Activated CD4-positive, alpha-beta memory T cell treated with anti-CD3 and anti-CD28 coated beads, Interleukin-2, amount 10 ng/mL, durations not matched to agents 7 days and 5 days (primary cell): ENCODE measurements at regions of chr3 and their contacts with region 1.

Region 1: GRCh38 chr3:194472290-194472920 is 14.4 kb downstream of the ATP13A3 start:
- DNase-seq: no peak
- H3K4me3 Mint-ChIP-seq: no peak overlapping the region
- H3K27ac Mint-ChIP-seq: no peak overlapping the region
- H3K4me1 Mint-ChIP-seq: peaks cover 6% of the 10 kb centered on the region
- H3K27me3 Mint-ChIP-seq: no peaks in the 10 kb centered on the region

Region 2: DNA sequence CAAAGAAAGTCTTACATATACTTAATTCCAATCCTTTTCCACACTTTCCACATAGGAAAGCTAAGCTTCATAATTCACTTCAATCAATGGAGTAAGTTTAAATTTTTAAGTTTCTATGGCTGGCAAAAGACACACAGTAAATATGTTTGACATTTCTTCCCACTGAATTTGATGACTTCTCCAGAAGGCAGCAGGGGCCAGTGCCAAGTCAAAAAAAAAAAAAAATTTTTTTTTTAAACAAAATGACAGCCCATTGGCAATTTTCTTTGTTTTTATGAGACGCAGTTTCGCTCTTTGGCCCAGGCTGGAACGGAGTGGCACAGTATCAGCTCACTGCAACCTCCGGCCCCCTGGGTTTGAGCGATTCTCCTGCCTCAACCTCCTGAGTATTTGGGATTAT is 14.3 kb before region 1 on chr3:
- CTCF ChIA-PET with region 1: interaction called, 12 read pairs
- POLR2A ChIA-PET with region 1: no interaction called
- DNase-seq: no peak
- H3K4me3 Mint-ChIP-seq: no peak overlapping the region
- H3K27ac Mint-ChIP-seq: no peak overlapping the region
- H3K4me1 Mint-ChIP-seq: no peaks in the 10 kb centered on the region
- H3K27me3 Mint-ChIP-seq: no peaks in the 10 kb centered on the region

Region 3: GRCh38 chr3:194486540-194487288 is 14.3 kb after region 1 on chr3 and contains the start of gene ATP13A3:
- CTCF ChIA-PET with region 1: interaction called, 23 read pairs
- POLR2A ChIA-PET with region 1: interaction called, 14 read pairs
- DNase-seq: peak; percentile 91
- H3K4me3 Mint-ChIP-seq: peak within 1 kb of the TSS; percentile 91
- H3K27ac Mint-ChIP-seq: peak within 1 kb of the TSS; percentile 91
- H3K4me1 Mint-ChIP-seq: peaks cover 64% of the 10 kb centered on the region
- H3K27me3 Mint-ChIP-seq: no peaks in the 10 kb centered on the region
- total RNA-seq, gene ATP13A3: 76.8 to 77.8 TPM

Region 4: DNA sequence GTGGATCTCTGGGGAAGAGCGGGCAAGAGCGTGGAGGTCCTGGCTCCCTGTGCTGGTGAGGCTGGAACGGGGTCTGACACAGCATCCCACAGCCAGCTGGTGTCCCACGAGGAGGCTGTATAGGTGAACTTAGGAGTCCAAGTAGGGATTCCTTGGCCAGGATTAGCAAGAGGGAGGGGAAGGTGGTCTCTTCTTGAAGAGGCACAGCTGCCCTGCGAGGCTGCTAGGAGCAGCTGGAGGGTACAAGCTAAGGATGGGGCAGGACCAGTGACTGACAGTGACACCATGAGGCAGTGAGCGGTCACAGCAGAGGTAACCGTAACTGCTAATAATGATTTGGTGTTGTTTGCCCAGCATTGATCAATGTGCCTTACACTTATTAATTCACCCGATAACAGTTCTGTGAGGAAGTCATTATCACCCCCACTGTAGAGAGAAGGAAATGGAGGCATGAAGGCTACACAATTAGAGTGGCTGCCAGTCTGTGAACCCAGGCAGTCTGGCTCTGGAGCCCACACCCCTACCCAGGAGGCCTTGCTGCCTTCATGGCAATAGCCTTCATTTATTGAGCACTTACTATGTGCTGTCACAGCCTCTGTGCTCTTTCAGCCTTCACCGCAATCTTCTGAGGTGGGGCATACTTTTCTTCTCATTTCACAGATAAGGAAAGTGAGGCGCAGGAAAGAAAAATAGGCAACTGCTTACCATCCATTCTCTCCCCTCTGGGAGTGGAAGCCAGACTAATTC is 101.5 kb after region 1 on chr3:
- CTCF ChIA-PET with region 1: interaction called, 40 read pairs
- POLR2A ChIA-PET with region 1: interaction called, 3 read pairs
- DNase-seq: peak; percentile 43
- H3K4me3 Mint-ChIP-seq: no peak overlapping the region
- H3K27ac Mint-ChIP-seq: no peak overlapping the region
- H3K4me1 Mint-ChIP-seq: peaks cover 18% of the 10 kb centered on the region
- H3K27me3 Mint-ChIP-seq: peaks cover 28% of the 10 kb centered on the region

Region 5: DNA sequence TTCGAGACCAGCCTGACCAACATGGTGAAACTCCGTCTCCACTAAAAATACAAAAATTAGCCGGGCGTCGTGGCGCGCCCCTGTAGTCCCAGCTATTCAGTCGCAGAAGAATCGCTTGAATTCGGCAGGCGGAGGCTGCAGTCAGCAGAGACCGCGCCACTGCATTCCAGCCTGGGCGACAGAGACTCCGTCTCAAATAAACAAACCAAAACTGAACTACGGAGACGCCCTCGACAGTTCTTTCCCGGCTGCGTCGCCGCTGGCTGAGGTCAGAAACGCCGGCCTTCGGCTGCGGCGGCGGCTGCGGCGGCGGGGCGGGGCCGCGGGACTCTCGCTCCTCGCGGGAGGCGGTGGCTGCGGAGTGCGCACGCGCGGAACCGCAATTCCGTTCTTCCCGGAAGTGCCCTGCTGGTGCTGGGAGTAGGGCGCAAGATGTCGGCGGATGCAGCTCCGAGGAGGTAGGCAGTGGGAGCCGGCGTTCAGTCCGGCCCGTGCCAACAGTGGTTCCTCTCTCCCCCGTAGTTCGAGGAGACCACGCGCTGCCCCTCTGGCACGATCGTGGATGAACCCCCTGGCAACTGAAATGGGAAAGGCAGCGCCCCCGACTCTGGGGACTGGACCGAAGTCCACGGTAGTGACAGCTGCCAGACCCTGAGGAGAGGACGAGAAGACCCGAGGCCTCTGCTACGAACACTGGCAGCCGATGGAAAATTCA is 111.4 kb after region 1 on chr3:
- CTCF ChIA-PET with region 1: interaction called, 24 read pairs
- POLR2A ChIA-PET with region 1: interaction called, 7 read pairs
- DNase-seq: peak; percentile 95
- H3K4me3 Mint-ChIP-seq: peak overlapping the region; percentile 97
- H3K27ac Mint-ChIP-seq: peak overlapping the region; percentile 93
- H3K4me1 Mint-ChIP-seq: peaks cover 31% of the 10 kb centered on the region
- H3K27me3 Mint-ChIP-seq: no peaks in the 10 kb centered on the region

Region 6: DNA sequence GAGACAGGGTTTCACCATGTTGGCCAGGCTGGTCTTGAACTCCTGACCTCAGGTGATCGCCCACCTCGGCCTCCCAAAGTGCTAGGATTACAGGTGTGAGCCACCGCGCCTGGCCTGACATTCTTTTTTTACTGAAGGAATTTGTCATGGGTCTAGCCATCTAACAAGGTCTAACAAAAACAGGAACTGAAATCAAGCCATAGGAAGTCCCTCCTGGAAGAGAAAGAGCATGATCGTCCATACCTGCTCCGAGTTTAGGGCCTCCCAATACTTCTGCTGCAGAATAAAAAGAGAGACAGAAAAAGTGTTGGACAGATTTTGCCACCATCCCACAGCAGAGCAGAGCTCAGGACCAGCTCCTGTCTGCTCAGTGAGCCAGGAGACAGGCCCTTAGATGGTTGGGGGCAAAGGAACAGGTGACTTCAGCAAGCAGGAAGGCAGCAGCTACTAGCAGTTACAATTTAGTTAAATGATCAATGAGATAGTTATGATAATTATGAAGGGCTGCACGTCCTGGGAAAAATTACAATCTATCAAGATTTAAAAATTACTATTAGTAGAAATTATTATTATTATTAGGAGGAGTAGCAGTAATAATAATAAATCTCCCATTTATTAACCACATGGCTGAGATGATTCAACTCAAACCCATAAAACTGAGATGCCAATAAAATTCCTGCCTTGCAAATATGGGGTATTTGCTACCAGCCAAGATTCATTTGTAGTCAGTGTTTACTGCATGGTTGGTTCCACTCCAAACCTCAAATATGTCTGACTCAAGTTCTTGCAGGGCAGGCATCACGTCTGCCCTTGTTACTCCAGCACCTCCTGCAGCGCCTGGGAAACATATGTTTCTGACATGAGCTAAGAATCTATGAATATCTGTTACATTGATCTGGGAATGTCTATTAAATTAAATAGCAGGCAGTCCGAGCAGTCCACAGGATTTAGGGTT is 120.7 kb after region 1 on chr3:
- CTCF ChIA-PET with region 1: interaction called, 75 read pairs
- POLR2A ChIA-PET with region 1: interaction called, 5 read pairs
- DNase-seq: no peak
- H3K4me3 Mint-ChIP-seq: no peak overlapping the region
- H3K27ac Mint-ChIP-seq: no peak overlapping the region
- H3K4me1 Mint-ChIP-seq: peaks cover 6% of the 10 kb centered on the region
- H3K27me3 Mint-ChIP-seq: no peaks in the 10 kb centered on the region